Heart left ventricle (tissue), 16 donors: ENCODE measurements at regions of chr13 and their contacts with region 1.

Region 1: GRCh38 chr13:74586847-74587246 is 452.6 kb upstream of the KLF12 start:
- DNase-seq: no peak
- ATAC-seq: no peak
- H3K4me3 ChIP-seq: no peak overlapping the region
- H3K27ac ChIP-seq: no peak overlapping the region
- H3K4me1 ChIP-seq: no peaks in the 10 kb centered on the region
- H3K27me3 ChIP-seq: no peaks in the 10 kb centered on the region
- CTCF ChIP-seq: no peak
- POLR2A ChIP-seq: no peak

Region 2: GRCh38 chr13:74904556-74904955 is 317.7 kb after region 1 on chr13:
- intact Hi-C with region 1: no loop called
- DNase-seq: no peak
- ATAC-seq: no peak
- H3K4me3 ChIP-seq: no peak overlapping the region
- H3K27ac ChIP-seq: no peak overlapping the region
- H3K4me1 ChIP-seq: no peaks in the 10 kb centered on the region
- H3K27me3 ChIP-seq: no peaks in the 10 kb centered on the region
- CTCF ChIP-seq: no peak
- POLR2A ChIP-seq: no peak

Region 3: GRCh38 chr13:75102001-75102716 is 515.3 kb after region 1 on chr13:
- intact Hi-C with region 1: loop called in 1 of 10 experiments (anchors 10 kb)
- DNase-seq: no peak
- ATAC-seq: no peak
- H3K4me3 ChIP-seq: no peak overlapping the region
- H3K27ac ChIP-seq: no peak overlapping the region
- H3K4me1 ChIP-seq: peaks cover 0 to 5% (median 0%) of the 10 kb centered on the region in 12 donors
- H3K27me3 ChIP-seq: no peaks in the 10 kb centered on the region
- CTCF ChIP-seq: no peak
- POLR2A ChIP-seq: no peak